PC-3 (cell line): ENCODE measurements at regions of chr2 and their contacts with region 1.

Region 1: DNA sequence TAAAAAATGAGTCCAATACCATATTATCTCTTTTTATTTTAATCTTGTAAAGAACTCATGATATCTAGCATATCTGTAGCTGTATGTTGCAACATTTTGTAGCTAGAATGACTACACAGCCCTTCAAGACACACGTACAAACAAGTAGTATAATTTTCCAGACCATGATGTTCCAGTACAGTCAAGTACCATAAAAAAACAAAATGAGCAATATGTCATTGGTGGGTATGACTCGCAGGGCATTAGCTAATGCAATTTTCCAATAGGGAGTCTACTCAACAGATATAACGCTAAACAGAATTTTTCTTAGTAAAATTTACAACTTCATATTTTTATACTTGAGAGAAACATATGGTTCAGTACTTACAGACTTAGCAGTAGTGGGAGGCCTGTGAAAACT is 53.6 kb upstream of the UGP2 start:
- DNase-seq: peak; percentile 39
- ATAC-seq: 0 out of 2 replicates have a peak, but pooled peaks have one; percentile 29
- H3K4me3 ChIP-seq: no peak overlapping the region
- H3K27ac ChIP-seq: no peak overlapping the region
- H3K4me1 ChIP-seq: peaks cover 22% of the 10 kb centered on the region
- H3K27me3 ChIP-seq: no peaks in the 10 kb centered on the region
- CTCF ChIP-seq: no peak

Region 2: DNA sequence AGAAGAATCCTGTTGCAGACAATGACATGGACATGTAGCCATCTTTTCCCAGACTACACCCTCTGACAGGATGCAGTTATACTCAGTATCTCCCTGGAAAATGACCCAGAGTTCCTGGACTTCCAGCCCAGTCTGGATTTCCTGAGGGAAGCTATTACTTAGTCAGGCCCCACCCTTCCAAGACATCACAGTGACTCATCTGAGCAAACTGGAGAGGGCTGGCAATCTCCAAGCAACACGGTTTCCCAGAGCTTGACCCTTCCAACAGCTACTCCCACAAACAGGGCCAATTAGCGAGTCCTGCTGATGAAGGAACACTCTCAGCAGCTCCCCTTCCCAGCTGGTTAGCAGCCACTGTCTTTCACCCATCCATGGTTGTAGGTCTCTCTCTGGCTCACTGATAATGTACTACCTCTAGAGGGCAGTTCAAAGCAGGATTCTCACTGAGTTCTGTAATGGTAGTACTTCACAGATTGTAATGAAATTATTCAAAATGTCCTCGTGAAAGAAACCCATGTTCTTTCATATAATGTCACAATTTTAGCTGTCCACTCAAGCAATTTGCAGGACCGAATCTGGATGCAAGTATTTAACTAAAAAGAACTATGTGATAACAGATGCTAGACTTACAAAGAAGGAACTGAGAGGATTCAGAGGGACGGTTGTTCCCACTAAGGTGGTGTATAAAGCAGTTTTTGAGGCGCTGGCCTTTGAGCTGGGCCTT is 89.1 kb before region 1 on chr2:
- CTCF ChIA-PET with region 1: no interaction called
- POLR2A ChIA-PET with region 1: no interaction called
- intact Hi-C with region 1: no loop called
- DNase-seq: peak; percentile 93
- ATAC-seq: peak; percentile 89
- H3K4me3 ChIP-seq: peak overlapping the region; percentile 34
- H3K27ac ChIP-seq: peak overlapping the region; percentile 93
- H3K4me1 ChIP-seq: peaks cover 41% of the 10 kb centered on the region
- H3K27me3 ChIP-seq: no peaks in the 10 kb centered on the region
- CTCF ChIP-seq: peak; percentile 72

Region 3: GRCh38 chr2:63755965-63756364 is 32.1 kb before region 1 on chr2:
- CTCF ChIA-PET with region 1: no interaction called
- POLR2A ChIA-PET with region 1: no interaction called
- intact Hi-C with region 1: no loop called
- DNase-seq: peak; percentile 67
- ATAC-seq: peak; percentile 78
- H3K4me3 ChIP-seq: no peak overlapping the region
- H3K27ac ChIP-seq: no peak overlapping the region
- H3K4me1 ChIP-seq: peaks cover 15% of the 10 kb centered on the region
- H3K27me3 ChIP-seq: no peaks in the 10 kb centered on the region
- CTCF ChIP-seq: no peak

Region 4: GRCh38 chr2:63819765-63820717 is 32.0 kb after region 1 on chr2:
- CTCF ChIA-PET with region 1: no interaction called
- POLR2A ChIA-PET with region 1: no interaction called
- intact Hi-C with region 1: no loop called
- DNase-seq: no peak
- ATAC-seq: no peak
- H3K4me3 ChIP-seq: no peak overlapping the region
- H3K27ac ChIP-seq: no peak overlapping the region
- H3K4me1 ChIP-seq: no peaks in the 10 kb centered on the region
- H3K27me3 ChIP-seq: no peaks in the 10 kb centered on the region
- CTCF ChIP-seq: no peak

Region 5: DNA sequence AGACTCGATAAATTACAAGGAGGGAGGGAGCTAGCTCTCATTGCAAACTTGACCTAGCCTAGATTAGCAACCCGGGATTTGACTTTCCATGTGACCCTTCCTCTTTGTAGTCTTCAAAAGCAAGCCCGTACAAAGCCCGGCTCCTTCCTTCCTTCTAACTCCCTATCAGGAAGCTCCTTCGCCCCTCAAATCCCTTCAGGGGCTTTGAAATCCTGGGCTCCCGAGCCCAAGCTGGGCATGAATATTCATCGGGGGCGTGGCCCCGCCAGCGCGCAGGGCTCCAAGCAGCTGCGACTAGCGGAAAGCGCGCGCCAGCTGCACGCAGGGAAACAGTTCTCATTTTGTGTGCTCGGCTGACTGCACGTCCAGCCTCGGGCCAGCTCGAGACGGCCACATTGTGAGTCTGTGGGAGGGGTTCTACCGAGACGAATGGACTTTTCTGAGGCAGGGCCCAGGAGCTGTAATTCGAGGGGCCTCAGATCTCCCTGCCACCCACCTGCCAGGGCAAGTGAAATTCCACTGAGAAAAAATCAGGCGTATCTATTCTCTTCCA is 440.1 kb after region 1 on chr2:
- CTCF ChIA-PET with region 1: no interaction called
- POLR2A ChIA-PET with region 1: no interaction called
- intact Hi-C with region 1: loop called (anchors 5 kb)
- DNase-seq: peak; percentile 67
- ATAC-seq: peak; percentile 97
- H3K4me3 ChIP-seq: peak overlapping the region; percentile 72
- H3K27ac ChIP-seq: no peak overlapping the region
- H3K4me1 ChIP-seq: no peaks in the 10 kb centered on the region
- H3K27me3 ChIP-seq: no peaks in the 10 kb centered on the region
- CTCF ChIP-seq: no peak